Aorta (tissue), 5 donors: ENCODE measurements at regions of chr21 and their contacts with region 1.

Region 1: DNA sequence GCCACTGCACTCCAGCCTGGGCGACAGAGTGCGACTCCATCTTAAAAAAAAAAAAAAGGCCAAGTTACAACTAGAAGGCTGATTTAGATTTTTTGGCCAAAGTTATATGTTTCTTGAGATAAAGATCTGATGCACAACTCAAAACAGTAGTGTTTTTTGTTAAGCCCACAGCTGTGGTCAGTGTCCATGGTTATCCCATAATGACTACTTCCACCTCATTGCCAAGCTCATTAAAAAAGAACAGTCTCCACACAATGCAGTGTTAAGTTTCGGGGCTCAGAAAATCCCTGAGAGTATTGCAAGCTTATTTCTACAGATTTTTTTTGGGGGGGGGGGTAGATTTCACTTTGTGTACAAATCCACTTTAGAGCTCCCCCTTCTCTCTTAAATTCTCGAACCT is 120.5 kb downstream of the RUNX1 start:
- DNase-seq: no peak
- ATAC-seq: no peak
- H3K4me3 ChIP-seq: no peak overlapping the region
- H3K27ac ChIP-seq: no peak overlapping the region
- H3K4me1 ChIP-seq: no peaks in the 10 kb centered on the region
- H3K27me3 ChIP-seq: no peaks in the 10 kb centered on the region

Region 2: GRCh38 chr21:34908419-34909055 is 20.1 kb before region 1 on chr21:
- intact Hi-C with region 1: loop called in 1 of 2 experiments (anchors 2 kb)
- DNase-seq: no peak
- ATAC-seq: no peak
- H3K4me3 ChIP-seq: no peak overlapping the region
- H3K27ac ChIP-seq: no peak overlapping the region
- H3K4me1 ChIP-seq: no peaks in the 10 kb centered on the region
- H3K27me3 ChIP-seq: no peaks in the 10 kb centered on the region

Region 3: DNA sequence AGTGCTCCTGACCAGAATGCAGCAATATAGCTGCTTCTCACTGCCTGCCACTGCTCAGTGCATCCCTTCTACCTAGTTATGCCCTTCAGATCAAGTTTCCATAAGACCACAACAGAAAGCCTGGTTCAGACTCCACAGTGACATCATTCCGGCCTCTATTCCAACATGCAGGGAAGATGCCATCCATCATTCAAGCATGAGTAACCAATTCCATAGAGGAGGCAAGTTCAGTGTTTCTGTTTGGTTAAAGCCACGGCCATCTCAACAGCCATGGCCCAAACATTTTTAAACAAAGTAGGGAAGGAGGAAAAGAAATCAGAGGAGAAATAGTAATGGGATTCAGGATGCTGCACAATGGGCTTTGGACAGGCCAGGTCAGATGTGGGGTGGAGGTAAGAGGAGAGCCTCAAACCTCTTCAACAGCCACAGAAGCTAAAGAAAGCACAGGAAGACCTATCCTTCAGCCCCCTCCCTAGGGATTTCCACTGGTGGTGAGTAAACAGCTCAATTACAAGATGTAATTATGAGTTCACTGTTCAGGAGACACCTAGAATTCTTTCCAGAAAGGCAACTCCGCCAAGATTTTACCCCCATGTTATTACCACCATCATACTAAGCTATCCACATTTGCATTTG is 646.8 kb after region 1 on chr21:
- intact Hi-C with region 1: no loop called
- DNase-seq: no peak
- ATAC-seq: no peak
- H3K4me3 ChIP-seq: no peak overlapping the region
- H3K27ac ChIP-seq: no peak overlapping the region
- H3K4me1 ChIP-seq: no peaks in the 10 kb centered on the region
- H3K27me3 ChIP-seq: no peaks in the 10 kb centered on the region

Region 4: GRCh38 chr21:35603494-35603893 is 674.9 kb after region 1 on chr21:
- intact Hi-C with region 1: no loop called
- DNase-seq: no peak
- ATAC-seq: no peak
- H3K4me3 ChIP-seq: no peak overlapping the region
- H3K27ac ChIP-seq: no peak overlapping the region
- H3K4me1 ChIP-seq: no peaks in the 10 kb centered on the region
- H3K27me3 ChIP-seq: no peaks in the 10 kb centered on the region